B cell (primary cell): ENCODE measurements at regions of chr19 and their contacts with region 1.

Region 1: GRCh38 chr19:46954993-46955812 is 64.4 kb upstream of the NPAS1 start:
- DNase-seq: peak; percentile 39
- ATAC-seq: peak; percentile 53
- H3K4me3 ChIP-seq: peak overlapping the region in 4 of 5 experiments; percentile 25 to 52 (median 38)
- H3K4me3 Mint-ChIP-seq: peak overlapping the region; percentile 44
- H3K27ac ChIP-seq: peak overlapping the region in 1 of 2 donors; percentile 18
- H3K27ac Mint-ChIP-seq: peak overlapping the region; percentile 65
- H3K4me1 ChIP-seq: peaks cover 12 to 14% of the 10 kb centered on the region in 2 donors
- H3K4me1 Mint-ChIP-seq: peaks cover 33% of the 10 kb centered on the region
- H3K27me3 ChIP-seq: no peaks in the 10 kb centered on the region
- H3K27me3 Mint-ChIP-seq: no peaks in the 10 kb centered on the region
- CTCF ChIP-seq: no peak

Region 2: GRCh38 chr19:46850228-46851203 is 104.7 kb before region 1 on chr19 and contains the start of gene AP2S1:
- CTCF ChIA-PET with region 1: no interaction called
- POLR2A ChIA-PET with region 1: no interaction called
- intact Hi-C with region 1: loop called (anchors 10 kb)
- DNase-seq: peak; percentile 95
- ATAC-seq: peak; percentile 93
- H3K4me3 ChIP-seq: peak within 1 kb of the TSS; percentile 59 to 89 (median 82)
- H3K4me3 Mint-ChIP-seq: peak within 1 kb of the TSS; percentile 98
- H3K27ac ChIP-seq: peak within 1 kb of the TSS; percentile 58 to 81
- H3K27ac Mint-ChIP-seq: peak within 1 kb of the TSS; percentile 86
- H3K4me1 ChIP-seq: peaks cover 17 to 24% of the 10 kb centered on the region in 2 donors
- H3K4me1 Mint-ChIP-seq: peaks cover 32% of the 10 kb centered on the region
- H3K27me3 ChIP-seq: no peaks in the 10 kb centered on the region
- H3K27me3 Mint-ChIP-seq: no peaks in the 10 kb centered on the region
- CTCF ChIP-seq: no peak
- total RNA-seq, gene AP2S1: 47.2 and 49.3 TPM in 2 replicates

Region 3: GRCh38 chr19:46890423-46891170 is 64.6 kb before region 1 on chr19:
- CTCF ChIA-PET with region 1: no interaction called
- POLR2A ChIA-PET with region 1: interaction called, 12 read pairs
- intact Hi-C with region 1: no loop called
- DNase-seq: no peak
- ATAC-seq: no peak
- H3K4me3 ChIP-seq: no peak overlapping the region
- H3K4me3 Mint-ChIP-seq: no peak overlapping the region
- H3K27ac ChIP-seq: no peak overlapping the region
- H3K27ac Mint-ChIP-seq: no peak overlapping the region
- H3K4me1 ChIP-seq: peaks cover 15% of the 10 kb centered on the region in 2 donors
- H3K4me1 Mint-ChIP-seq: peaks cover 49% of the 10 kb centered on the region
- H3K27me3 ChIP-seq: no peaks in the 10 kb centered on the region
- H3K27me3 Mint-ChIP-seq: no peaks in the 10 kb centered on the region
- CTCF ChIP-seq: no peak

Region 4: GRCh38 chr19:47296036-47296435 is 340.8 kb after region 1 on chr19:
- CTCF ChIA-PET with region 1: no interaction called
- POLR2A ChIA-PET with region 1: no interaction called
- intact Hi-C with region 1: no loop called
- DNase-seq: peak; percentile 86
- ATAC-seq: peak; percentile 80
- H3K4me3 ChIP-seq: no peak overlapping the region
- H3K4me3 Mint-ChIP-seq: no peak overlapping the region
- H3K27ac ChIP-seq: no peak overlapping the region
- H3K27ac Mint-ChIP-seq: no peak overlapping the region
- H3K4me1 ChIP-seq: peaks cover 4 to 18% of the 10 kb centered on the region in 2 donors
- H3K4me1 Mint-ChIP-seq: peaks cover 13% of the 10 kb centered on the region
- H3K27me3 ChIP-seq: peaks cover 0 to 6% (median 1%) of the 10 kb centered on the region in 4 experiments
- H3K27me3 Mint-ChIP-seq: no peaks in the 10 kb centered on the region
- CTCF ChIP-seq: peak; percentile 78